ENCODE measurements at regions of chr15 and their contacts with region 1.

Region 1: DNA sequence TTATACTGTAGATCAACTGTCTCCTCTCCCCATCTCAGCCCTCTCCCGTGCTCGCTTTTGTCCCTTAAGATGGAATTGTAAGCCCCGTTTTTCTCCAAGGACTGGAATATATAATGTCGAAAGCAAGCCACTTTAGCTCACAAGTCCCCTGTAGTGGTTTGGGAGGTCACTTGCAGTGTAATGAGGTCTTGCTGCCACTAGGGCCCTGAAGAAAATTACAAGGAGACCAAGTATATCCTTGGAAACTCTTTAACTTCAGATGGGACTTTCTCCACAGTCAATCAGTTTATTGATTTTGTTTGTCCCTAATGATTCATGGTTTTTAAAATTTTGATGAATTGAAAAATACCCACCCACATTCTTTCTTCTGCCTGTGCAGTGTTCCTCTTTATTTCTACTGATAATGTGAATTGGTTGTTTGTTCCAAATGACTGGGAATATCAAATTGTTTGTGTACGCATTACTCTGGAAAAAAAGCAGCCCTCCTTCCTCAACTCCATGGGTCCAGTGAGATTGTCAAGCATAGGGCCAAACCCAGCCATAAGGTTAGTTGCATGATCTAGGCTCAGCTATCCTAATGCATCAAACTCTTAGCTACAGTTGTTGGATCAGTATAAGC is 294.8 kb downstream of the MCTP2 start:
- DNase-seq: no peak
- ATAC-seq: no peak
- H3K4me3 ChIP-seq: no peak overlapping the region
- H3K27ac ChIP-seq: no peak overlapping the region
- H3K4me1 ChIP-seq: no peaks in the 10 kb centered on the region
- H3K27me3 ChIP-seq: no peaks in the 10 kb centered on the region
- CTCF ChIP-seq: peak in 5 of 9 donors; percentile 15 to 39 (median 32)

Region 2: GRCh38 chr15:94478763-94479162 is 47.4 kb before region 1 on chr15:
- intact Hi-C with region 1: loop called in 1 of 10 experiments (anchors 5 kb)
- DNase-seq: no peak
- ATAC-seq: no peak
- H3K4me3 ChIP-seq: no peak overlapping the region
- H3K27ac ChIP-seq: no peak overlapping the region
- H3K4me1 ChIP-seq: no peaks in the 10 kb centered on the region
- H3K27me3 ChIP-seq: peaks cover 0 to 40% (median 4%) of the 10 kb centered on the region in 7 donors
- CTCF ChIP-seq: no peak

Region 3: DNA sequence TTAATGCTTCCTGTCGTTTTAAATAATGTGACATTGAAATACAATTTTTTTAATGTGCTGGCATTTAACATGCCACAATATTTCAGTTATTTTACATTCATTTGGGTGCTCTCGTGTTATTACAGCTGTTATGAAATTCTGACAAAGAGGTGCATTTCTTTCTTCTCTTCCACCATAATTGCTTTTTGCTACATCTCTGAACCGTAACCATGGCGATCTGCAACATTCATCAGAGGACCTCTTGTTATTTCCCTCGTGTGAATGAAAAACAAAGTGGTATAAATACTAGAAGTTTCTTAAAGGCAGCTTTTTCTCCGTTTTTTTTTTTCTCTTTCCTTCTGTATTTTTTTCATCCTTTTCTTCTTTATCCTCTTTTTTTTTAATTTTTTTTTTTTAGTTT is 21.5 kb after region 1 on chr15:
- intact Hi-C with region 1: no loop called
- DNase-seq: no peak
- ATAC-seq: no peak
- H3K4me3 ChIP-seq: no peak overlapping the region
- H3K27ac ChIP-seq: no peak overlapping the region
- H3K4me1 ChIP-seq: no peaks in the 10 kb centered on the region
- H3K27me3 ChIP-seq: peaks cover 0 to 3% (median 0%) of the 10 kb centered on the region in 7 donors
- CTCF ChIP-seq: no peak

Measured in heart right ventricle (tissue), 16 donors.